ENCODE measurements at regions of chr14 and their contacts with region 1.

Region 1: GRCh38 chr14:50830932-50831725 is at the start of gene NIN:
- DNase-seq: peak; percentile 58 to 80 (median 74)
- ATAC-seq: peak; percentile 91
- H3K4me3 ChIP-seq: peak within 1 kb of the TSS; percentile 80
- H3K4me3 Mint-ChIP-seq: peak within 1 kb of the TSS; percentile 91 to 99 (median 96)
- H3K27ac ChIP-seq: peak within 1 kb of the TSS; percentile 84
- H3K27ac Mint-ChIP-seq: peak within 1 kb of the TSS; percentile 85 to 99 (median 95)
- H3K4me1 ChIP-seq: peaks cover 40 to 42% of the 10 kb centered on the region in 2 donors
- H3K4me1 Mint-ChIP-seq: peaks cover 46 to 84% (median 74%) of the 10 kb centered on the region in 7 donors
- H3K27me3 ChIP-seq: no peaks in the 10 kb centered on the region
- H3K27me3 Mint-ChIP-seq: peaks cover 0 to 13% (median 0%) of the 10 kb centered on the region in 5 donors
- total RNA-seq, gene NIN: 84.5 to 149 (median 128) TPM

Region 2: DNA sequence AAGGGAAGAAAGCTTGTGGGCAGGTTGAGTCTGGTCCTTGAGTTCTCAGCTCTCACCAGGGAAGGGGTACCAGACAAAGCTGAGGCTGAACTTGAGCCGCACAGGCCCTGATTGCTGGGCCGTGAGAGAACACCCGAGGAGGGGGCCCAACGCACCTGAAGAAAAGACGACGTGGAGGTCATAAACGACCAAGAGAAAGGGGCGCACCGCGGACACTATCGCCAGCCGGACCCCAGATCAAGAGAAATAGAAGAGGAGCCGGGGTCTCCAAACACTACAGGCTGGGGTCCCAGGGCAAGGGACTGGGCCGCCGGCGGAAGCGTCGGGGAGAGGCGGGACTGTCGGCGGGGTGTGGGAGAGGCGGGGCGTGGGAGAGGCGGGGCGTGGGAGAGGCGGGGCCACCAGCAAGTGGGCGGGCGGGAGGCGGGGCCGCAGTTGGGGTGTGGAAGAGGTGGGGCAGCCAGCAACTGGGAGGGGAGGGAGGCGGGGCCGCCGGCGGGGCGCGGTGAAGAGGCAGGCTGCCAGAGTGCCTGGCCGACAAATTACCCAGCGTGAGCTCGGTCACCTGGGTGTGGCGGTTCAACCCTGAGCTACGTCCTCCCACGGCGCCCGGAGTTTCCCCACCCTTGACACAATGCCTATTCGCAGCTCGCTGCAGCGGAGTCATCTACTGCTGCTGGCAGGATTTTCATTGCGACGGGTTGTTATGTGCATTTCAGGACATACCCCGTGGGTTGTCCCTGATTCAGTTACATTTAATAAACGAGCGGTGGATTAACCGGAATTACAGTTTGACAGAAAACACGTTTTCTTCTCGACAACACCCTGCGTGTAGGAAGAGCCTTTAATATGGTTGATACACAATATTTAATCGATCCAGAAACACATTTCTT is 963.1 kb before region 1 on chr14:
- CTCF ChIA-PET with region 1: no interaction called
- POLR2A ChIA-PET with region 1: interaction called, 3 read pairs
- intact Hi-C with region 1: loop called (anchors 2 to 10 kb)
- DNase-seq: peak; percentile 87 to 97 (median 93)
- ATAC-seq: peak; percentile 96
- H3K4me3 ChIP-seq: peak overlapping the region; percentile 75
- H3K4me3 Mint-ChIP-seq: peak overlapping the region; percentile 79 to 95 (median 90)
- H3K27ac ChIP-seq: peak overlapping the region; percentile 91
- H3K27ac Mint-ChIP-seq: peak overlapping the region; percentile 93 to 99 (median 97)
- H3K4me1 ChIP-seq: peaks cover 31 to 35% of the 10 kb centered on the region in 2 donors
- H3K4me1 Mint-ChIP-seq: peaks cover 9 to 31% (median 17%) of the 10 kb centered on the region in 7 donors
- H3K27me3 ChIP-seq: no peaks in the 10 kb centered on the region
- H3K27me3 Mint-ChIP-seq: no peaks in the 10 kb centered on the region

Region 3: DNA sequence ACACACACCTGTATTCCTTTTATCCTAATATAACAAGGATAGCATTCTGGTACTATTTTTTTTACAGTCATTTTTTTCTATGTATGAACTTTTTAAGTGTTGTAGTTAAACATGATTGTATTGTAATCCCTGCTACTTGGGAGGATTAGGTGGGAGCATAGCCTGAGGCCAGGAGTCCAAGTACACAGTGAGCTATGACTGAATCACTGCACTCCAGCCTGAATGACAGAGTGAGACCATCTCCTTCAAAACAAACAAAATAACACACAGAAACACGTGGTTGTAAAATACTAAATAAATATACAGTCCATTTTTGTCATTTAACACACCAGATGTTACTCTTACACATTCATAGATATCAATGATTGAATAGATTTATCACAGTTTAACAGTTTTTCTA is 355.7 kb before region 1 on chr14:
- CTCF ChIA-PET with region 1: no interaction called
- POLR2A ChIA-PET with region 1: no interaction called
- intact Hi-C with region 1: no loop called
- DNase-seq: no peak
- ATAC-seq: no peak
- H3K4me3 ChIP-seq: no peak overlapping the region
- H3K4me3 Mint-ChIP-seq: no peak overlapping the region
- H3K27ac ChIP-seq: no peak overlapping the region
- H3K27ac Mint-ChIP-seq: no peak overlapping the region
- H3K4me1 ChIP-seq: no peaks in the 10 kb centered on the region
- H3K4me1 Mint-ChIP-seq: peaks cover 0 to 4% (median 0%) of the 10 kb centered on the region in 7 donors
- H3K27me3 ChIP-seq: no peaks in the 10 kb centered on the region
- H3K27me3 Mint-ChIP-seq: no peaks in the 10 kb centered on the region

Region 4: GRCh38 chr14:50773632-50774541 is 57.2 kb before region 1 on chr14:
- CTCF ChIA-PET with region 1: interaction called, 12 read pairs
- POLR2A ChIA-PET with region 1: interaction called, 29 read pairs
- intact Hi-C with region 1: loop called in 1 of 2 experiments (anchors 1 kb)
- DNase-seq: peak in 1 of 9 donors; percentile 38
- ATAC-seq: peak; percentile 65
- H3K4me3 ChIP-seq: no peak overlapping the region
- H3K4me3 Mint-ChIP-seq: peak overlapping the region in 3 of 10 donors; percentile 1 to 27 (median 18)
- H3K27ac ChIP-seq: no peak overlapping the region
- H3K27ac Mint-ChIP-seq: peak overlapping the region in 8 of 9 donors; percentile 1 to 78 (median 37)
- H3K4me1 ChIP-seq: peaks cover 9 to 13% of the 10 kb centered on the region in 2 donors
- H3K4me1 Mint-ChIP-seq: peaks cover 17 to 41% (median 28%) of the 10 kb centered on the region in 7 donors
- H3K27me3 ChIP-seq: no peaks in the 10 kb centered on the region
- H3K27me3 Mint-ChIP-seq: no peaks in the 10 kb centered on the region

Region 5: GRCh38 chr14:50785457-50786063 is 45.6 kb before region 1 on chr14:
- CTCF ChIA-PET with region 1: interaction called, 12 read pairs
- POLR2A ChIA-PET with region 1: interaction called, 47 read pairs
- intact Hi-C with region 1: loop called (anchors 1 to 2 kb)
- DNase-seq: peak in 5 of 9 donors; percentile 22 to 50 (median 41)
- ATAC-seq: peak; percentile 60
- H3K4me3 ChIP-seq: peak overlapping the region; percentile 25
- H3K4me3 Mint-ChIP-seq: peak overlapping the region; percentile 50 to 83 (median 71)
- H3K27ac ChIP-seq: peak overlapping the region; percentile 63
- H3K27ac Mint-ChIP-seq: peak overlapping the region; percentile 83 to 98 (median 93)
- H3K4me1 ChIP-seq: peaks cover 60 to 68% of the 10 kb centered on the region in 2 donors
- H3K4me1 Mint-ChIP-seq: peaks cover 40 to 100% (median 88%) of the 10 kb centered on the region in 7 donors
- H3K27me3 ChIP-seq: no peaks in the 10 kb centered on the region
- H3K27me3 Mint-ChIP-seq: no peaks in the 10 kb centered on the region

Region 6: GRCh38 chr14:50813544-50813863 is 17.6 kb before region 1 on chr14:
- CTCF ChIA-PET with region 1: interaction called, 5 read pairs
- POLR2A ChIA-PET with region 1: interaction called, 91 read pairs
- intact Hi-C with region 1: loop called (anchors 1 kb)
- DNase-seq: peak in 7 of 9 donors; percentile 61 to 80 (median 75)
- ATAC-seq: peak; percentile 92
- H3K4me3 ChIP-seq: peak overlapping the region; percentile 38
- H3K4me3 Mint-ChIP-seq: peak overlapping the region; percentile 71 to 91 (median 86)
- H3K27ac ChIP-seq: peak overlapping the region; percentile 54
- H3K27ac Mint-ChIP-seq: peak overlapping the region; percentile 85 to 95 (median 93)
- H3K4me1 ChIP-seq: peaks cover 19 to 37% of the 10 kb centered on the region in 2 donors
- H3K4me1 Mint-ChIP-seq: peaks cover 42 to 81% (median 64%) of the 10 kb centered on the region in 7 donors
- H3K27me3 ChIP-seq: no peaks in the 10 kb centered on the region
- H3K27me3 Mint-ChIP-seq: no peaks in the 10 kb centered on the region